Activated T-helper 1 cell treated with anti-CD3 and anti-CD28 coated beads, Interleukin-12 subunit alpha, Interleukin-12 subunit beta, Interleukin-2, Interleukin-4 antibody, amounts not matched to agents 30 ng/mL and 10 ng/mL and 1 ng/mL, durations not matched to agents 14 hours and 24 hours and 36 hours (primary cell): ENCODE measurements at regions of chr3 and their contacts with region 1.

Region 1: GRCh38 chr3:46070595-46071093 is 43.4 kb upstream of the XCR1 start:
- DNase-seq: no peak
- H3K4me3 Mint-ChIP-seq: peak overlapping the region; percentile 53
- H3K27ac Mint-ChIP-seq: peak overlapping the region; percentile 96
- H3K4me1 Mint-ChIP-seq: peaks cover 70% of the 10 kb centered on the region
- H3K27me3 Mint-ChIP-seq: peaks cover 12% of the 10 kb centered on the region

Region 2: GRCh38 chr3:45978006-45978761 is 92.5 kb before region 1 on chr3:
- intact Hi-C with region 1: loop called (anchors 1 kb)
- DNase-seq: peak; percentile 72
- H3K4me3 Mint-ChIP-seq: peak overlapping the region; percentile 86
- H3K27ac Mint-ChIP-seq: peak overlapping the region; percentile 98
- H3K4me1 Mint-ChIP-seq: peaks cover 89% of the 10 kb centered on the region
- H3K27me3 Mint-ChIP-seq: no peaks in the 10 kb centered on the region

Region 3: DNA sequence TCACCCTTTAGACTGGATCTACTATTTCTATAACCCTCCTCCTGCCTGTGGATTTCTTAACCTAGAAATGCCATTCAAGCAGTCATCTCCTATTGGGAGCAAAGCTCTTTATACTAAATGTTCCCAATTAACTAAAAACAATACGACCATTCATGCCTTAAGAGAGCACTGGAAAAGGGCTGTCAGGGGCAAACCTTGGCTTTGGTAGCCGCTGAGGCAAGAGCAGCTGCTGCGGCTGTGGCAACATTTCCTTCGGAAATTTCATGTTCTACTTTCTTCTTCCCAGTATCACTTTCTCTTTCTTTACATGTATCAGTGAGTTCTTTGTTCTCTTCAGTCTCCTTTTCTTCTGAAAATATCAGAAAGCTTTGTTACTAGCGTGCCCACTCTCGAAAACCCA is 1564.4 kb after region 1 on chr3:
- intact Hi-C with region 1: no loop called
- DNase-seq: no peak
- H3K4me3 Mint-ChIP-seq: no peak overlapping the region
- H3K27ac Mint-ChIP-seq: no peak overlapping the region
- H3K4me1 Mint-ChIP-seq: no peaks in the 10 kb centered on the region
- H3K27me3 Mint-ChIP-seq: no peaks in the 10 kb centered on the region